ENCODE measurements at regions of chr19 and their contacts with region 1.

Region 1: GRCh38 chr19:40609561-40610395 is 8.6 kb downstream of the LTBP4 start:
- DNase-seq: peak; percentile 97
- ATAC-seq: peak; percentile 54
- H3K4me3 Mint-ChIP-seq: peak overlapping the region; percentile 69
- H3K27ac Mint-ChIP-seq: peak overlapping the region; percentile 97
- H3K4me1 Mint-ChIP-seq: peaks cover 63% of the 10 kb centered on the region
- H3K27me3 Mint-ChIP-seq: no peaks in the 10 kb centered on the region

Region 2: DNA sequence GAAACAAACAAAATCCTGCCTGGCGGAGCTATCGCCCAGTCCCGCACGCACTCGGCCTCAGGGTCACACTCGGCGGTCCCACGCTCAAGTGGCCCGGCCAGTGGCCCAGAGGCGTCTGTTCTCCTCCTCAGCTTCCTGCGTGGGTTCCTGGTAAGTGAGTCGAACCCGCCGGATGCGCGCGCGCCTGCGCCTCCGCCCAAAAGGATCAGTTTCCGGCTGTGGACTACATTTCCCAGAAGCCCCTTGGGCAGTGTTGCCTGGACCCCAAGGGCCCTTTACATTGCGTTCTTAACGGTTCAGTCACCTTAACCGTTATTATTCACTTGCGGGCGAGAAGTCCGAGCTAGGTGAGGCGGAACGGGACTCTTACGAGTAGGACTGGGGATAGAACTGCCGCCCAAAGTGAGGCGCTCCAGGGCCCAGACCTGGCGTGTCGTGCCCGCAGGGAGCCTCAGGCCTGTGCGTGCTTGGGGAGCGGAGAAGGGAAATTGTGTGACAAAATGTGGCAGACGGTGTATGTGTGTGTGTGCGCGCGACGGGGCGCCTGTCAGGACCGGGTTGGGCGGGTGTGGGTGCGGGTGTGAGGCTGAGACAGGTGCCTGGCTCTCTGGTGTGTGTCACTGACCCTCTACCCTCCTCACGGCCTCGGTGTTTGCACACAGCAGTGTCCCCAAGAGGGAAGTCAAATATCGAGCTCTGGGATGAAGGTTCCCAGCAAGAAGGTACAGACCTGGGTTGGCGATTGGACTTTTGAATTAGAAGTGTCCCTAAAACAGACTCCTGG is 612.8 kb before region 1 on chr19 and contains the start of gene ZNF546:
- CTCF ChIA-PET with region 1: no interaction called
- POLR2A ChIA-PET with region 1: no interaction called
- intact Hi-C with region 1: loop called in 1 of 2 experiments (anchors 2 kb)
- DNase-seq: peak; percentile 94
- ATAC-seq: peak; percentile 90
- H3K4me3 Mint-ChIP-seq: peak within 1 kb of the TSS; percentile 90
- H3K27ac Mint-ChIP-seq: peak within 1 kb of the TSS; percentile 99
- H3K4me1 Mint-ChIP-seq: peaks cover 48% of the 10 kb centered on the region
- H3K27me3 Mint-ChIP-seq: no peaks in the 10 kb centered on the region
- total RNA-seq, gene ZNF546: 6.3 to 6.9 TPM

Region 3: DNA sequence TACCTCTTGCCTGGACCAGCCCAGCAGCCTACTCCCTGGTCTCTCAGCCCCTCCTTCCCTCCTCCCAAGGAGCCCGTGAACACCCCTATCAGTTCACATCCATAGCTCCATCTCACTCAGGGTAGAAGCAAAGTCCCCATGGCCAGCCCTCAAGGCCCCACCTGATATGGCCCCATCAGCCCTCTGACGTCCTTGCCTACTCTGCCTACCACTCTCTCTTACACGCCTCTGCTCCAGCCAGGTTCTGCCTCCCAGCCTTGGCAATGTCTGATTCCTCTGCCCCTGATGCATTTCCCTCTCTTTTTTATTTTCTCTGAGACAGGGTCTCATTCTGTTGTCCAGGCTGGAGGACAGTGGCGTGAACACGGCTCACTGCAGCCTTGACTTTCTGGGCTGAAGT is 157.8 kb before region 1 on chr19:
- CTCF ChIA-PET with region 1: no interaction called
- POLR2A ChIA-PET with region 1: no interaction called
- intact Hi-C with region 1: no loop called
- DNase-seq: no peak
- ATAC-seq: no peak
- H3K4me3 Mint-ChIP-seq: no peak overlapping the region
- H3K27ac Mint-ChIP-seq: no peak overlapping the region
- H3K4me1 Mint-ChIP-seq: no peaks in the 10 kb centered on the region
- H3K27me3 Mint-ChIP-seq: no peaks in the 10 kb centered on the region

Region 4: GRCh38 chr19:40465557-40466150 is 144.1 kb before region 1 on chr19 and contains the start of gene BLVRB:
- CTCF ChIA-PET with region 1: interaction called, 6 read pairs
- POLR2A ChIA-PET with region 1: no interaction called
- intact Hi-C with region 1: loop called (anchors 1 to 5 kb)
- DNase-seq: peak; percentile 100
- ATAC-seq: peak; percentile 84
- H3K4me3 Mint-ChIP-seq: peak within 1 kb of the TSS; percentile 77
- H3K27ac Mint-ChIP-seq: peak within 1 kb of the TSS; percentile 87
- H3K4me1 Mint-ChIP-seq: peaks cover 30% of the 10 kb centered on the region
- H3K27me3 Mint-ChIP-seq: peaks cover 11% of the 10 kb centered on the region
- total RNA-seq, gene BLVRB: 34.1 to 35.6 TPM

Region 5: GRCh38 chr19:40576585-40577451 is 33.0 kb before region 1 on chr19 and contains the start of gene SHKBP1:
- CTCF ChIA-PET with region 1: no interaction called
- POLR2A ChIA-PET with region 1: interaction called, 4 read pairs
- intact Hi-C with region 1: loop called in 1 of 2 experiments (anchors 1 kb)
- DNase-seq: peak; percentile 96
- ATAC-seq: peak; percentile 100
- H3K4me3 Mint-ChIP-seq: peak within 1 kb of the TSS; percentile 85
- H3K27ac Mint-ChIP-seq: peak within 1 kb of the TSS; percentile 74
- H3K4me1 Mint-ChIP-seq: peaks cover 16% of the 10 kb centered on the region
- H3K27me3 Mint-ChIP-seq: no peaks in the 10 kb centered on the region
- total RNA-seq, gene SHKBP1: 100 to 155 TPM

Region 6: GRCh38 chr19:40662921-40663694 is 53.3 kb after region 1 on chr19:
- CTCF ChIA-PET with region 1: no interaction called
- POLR2A ChIA-PET with region 1: no interaction called
- intact Hi-C with region 1: no loop called
- DNase-seq: peak; percentile 96
- ATAC-seq: peak; percentile 81
- H3K4me3 Mint-ChIP-seq: peak overlapping the region; percentile 66
- H3K27ac Mint-ChIP-seq: peak overlapping the region; percentile 77
- H3K4me1 Mint-ChIP-seq: peaks cover 19% of the 10 kb centered on the region
- H3K27me3 Mint-ChIP-seq: no peaks in the 10 kb centered on the region

Region 7: GRCh38 chr19:40777937-40778705 is 168.3 kb after region 1 on chr19 and contains the start of gene RAB4B:
- CTCF ChIA-PET with region 1: no interaction called
- POLR2A ChIA-PET with region 1: no interaction called
- intact Hi-C with region 1: loop called in 1 of 2 experiments (anchors 1 kb)
- DNase-seq: peak; percentile 100
- ATAC-seq: peak; percentile 79
- H3K4me3 Mint-ChIP-seq: peak within 1 kb of the TSS; percentile 84
- H3K27ac Mint-ChIP-seq: peak within 1 kb of the TSS; percentile 94
- H3K4me1 Mint-ChIP-seq: peaks cover 38% of the 10 kb centered on the region
- H3K27me3 Mint-ChIP-seq: no peaks in the 10 kb centered on the region
- total RNA-seq, gene RAB4B: 26.4 to 33.7 TPM